Activated CD8-positive, alpha-beta T cell treated with anti-CD3 and anti-CD28 coated beads for 36 hours (primary cell): ENCODE measurements at regions of chr17 and their contacts with region 1.

Region 1: DNA sequence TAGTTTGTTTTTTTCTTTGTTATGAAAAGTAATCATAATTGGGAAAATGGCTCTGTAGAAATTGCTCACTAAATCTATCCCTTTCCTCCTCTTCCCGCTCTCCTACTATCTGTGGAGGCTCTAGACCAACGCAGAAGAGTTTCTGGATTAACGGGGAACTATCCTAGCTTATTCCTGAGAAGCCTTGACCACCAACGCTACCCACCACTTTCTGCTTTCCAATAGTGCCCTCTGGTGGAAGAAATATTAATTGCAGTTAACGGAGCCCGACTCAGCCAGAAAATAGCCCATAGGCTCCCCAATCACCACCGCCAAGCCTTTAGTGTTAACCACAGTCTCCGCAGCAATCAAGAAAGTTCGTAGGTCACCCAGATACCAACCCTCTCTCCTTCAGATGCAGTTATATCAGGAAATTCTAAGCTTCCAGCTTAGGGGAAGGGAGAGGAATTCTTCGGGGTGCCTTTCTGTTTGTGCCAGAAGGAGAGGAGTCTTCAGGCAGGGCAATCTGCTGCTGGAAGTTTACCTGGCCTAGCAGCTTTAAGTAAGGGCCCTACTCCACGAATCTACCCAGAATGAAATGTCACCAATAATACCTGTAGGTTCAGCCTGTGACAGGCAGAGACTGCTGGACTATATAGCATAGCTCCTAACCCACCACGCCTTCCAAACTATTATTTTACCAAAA is 23.0 kb upstream of the NSRP1 start:
- DNase-seq: peak; percentile 58
- ATAC-seq: peak; percentile 69
- H3K4me3 Mint-ChIP-seq: no peak overlapping the region
- H3K27ac Mint-ChIP-seq: no peak overlapping the region
- H3K4me1 Mint-ChIP-seq: peaks cover 4% of the 10 kb centered on the region
- H3K27me3 Mint-ChIP-seq: peaks cover 11% of the 10 kb centered on the region
- CTCF ChIP-seq: peak; percentile 91

Region 2: DNA sequence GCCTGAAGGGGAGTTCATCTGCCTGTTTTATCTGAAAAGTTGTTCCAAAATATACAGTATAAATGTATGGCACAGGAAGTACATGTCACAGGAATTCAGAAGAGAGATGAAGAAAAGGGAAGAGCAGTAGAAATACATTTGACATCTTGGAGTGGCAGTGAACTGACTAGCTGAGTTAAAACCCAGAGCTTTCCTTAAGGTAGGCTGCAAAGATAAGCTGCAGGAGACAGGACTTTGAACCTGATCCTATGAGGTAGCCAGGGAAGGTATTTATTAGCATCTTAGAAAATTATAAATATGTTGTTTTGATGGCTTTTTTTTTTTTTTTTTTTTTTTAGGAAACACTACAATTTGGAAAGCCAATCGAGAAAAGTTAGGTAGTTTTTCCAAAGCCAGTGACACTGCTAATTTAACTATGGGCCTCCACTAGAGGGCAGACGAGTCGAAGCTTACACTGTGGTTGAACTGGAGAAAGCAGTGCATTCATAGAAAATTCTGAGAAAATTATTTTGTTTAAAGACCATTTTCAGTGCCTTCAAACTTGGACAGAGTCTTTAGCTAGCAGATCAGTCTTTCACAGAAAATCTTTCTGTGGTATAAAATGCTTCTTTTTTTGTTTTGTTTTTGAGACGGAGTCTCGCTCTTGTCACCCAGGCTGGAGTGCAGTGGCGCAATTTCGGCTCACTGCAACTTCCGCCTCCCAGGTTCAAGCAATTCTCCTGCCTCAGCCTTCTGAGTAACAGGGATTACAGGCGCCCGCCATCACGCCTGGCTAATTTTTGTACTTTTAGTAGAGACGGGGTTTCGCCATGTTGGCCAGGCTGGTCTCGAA is 285.9 kb before region 1 on chr17:
- CTCF ChIA-PET with region 1: interaction called, 11 read pairs
- POLR2A ChIA-PET with region 1: no interaction called
- intact Hi-C with region 1: no loop called
- DNase-seq: peak; percentile 81
- ATAC-seq: peak; percentile 77
- H3K4me3 Mint-ChIP-seq: no peak overlapping the region
- H3K27ac Mint-ChIP-seq: no peak overlapping the region
- H3K4me1 Mint-ChIP-seq: peaks cover 14% of the 10 kb centered on the region
- H3K27me3 Mint-ChIP-seq: no peaks in the 10 kb centered on the region
- CTCF ChIP-seq: peak; percentile 90

Region 3: GRCh38 chr17:30021708-30022317 is 71.8 kb before region 1 on chr17:
- CTCF ChIA-PET with region 1: interaction called, 42 read pairs
- POLR2A ChIA-PET with region 1: interaction called, 3 read pairs
- intact Hi-C with region 1: loop called (anchors 1 kb)
- DNase-seq: peak; percentile 60
- ATAC-seq: peak; percentile 53
- H3K4me3 Mint-ChIP-seq: no peak overlapping the region
- H3K27ac Mint-ChIP-seq: no peak overlapping the region
- H3K4me1 Mint-ChIP-seq: no peaks in the 10 kb centered on the region
- H3K27me3 Mint-ChIP-seq: peaks cover 3% of the 10 kb centered on the region
- CTCF ChIP-seq: peak; percentile 95

Region 4: GRCh38 chr17:30041551-30041950 is 52.1 kb before region 1 on chr17:
- CTCF ChIA-PET with region 1: interaction called, 20 read pairs
- POLR2A ChIA-PET with region 1: interaction called, 5 read pairs
- intact Hi-C with region 1: no loop called
- DNase-seq: no peak
- ATAC-seq: no peak
- H3K4me3 Mint-ChIP-seq: no peak overlapping the region
- H3K27ac Mint-ChIP-seq: no peak overlapping the region
- H3K4me1 Mint-ChIP-seq: no peaks in the 10 kb centered on the region
- H3K27me3 Mint-ChIP-seq: peaks cover 10% of the 10 kb centered on the region
- CTCF ChIP-seq: no peak

Region 5: DNA sequence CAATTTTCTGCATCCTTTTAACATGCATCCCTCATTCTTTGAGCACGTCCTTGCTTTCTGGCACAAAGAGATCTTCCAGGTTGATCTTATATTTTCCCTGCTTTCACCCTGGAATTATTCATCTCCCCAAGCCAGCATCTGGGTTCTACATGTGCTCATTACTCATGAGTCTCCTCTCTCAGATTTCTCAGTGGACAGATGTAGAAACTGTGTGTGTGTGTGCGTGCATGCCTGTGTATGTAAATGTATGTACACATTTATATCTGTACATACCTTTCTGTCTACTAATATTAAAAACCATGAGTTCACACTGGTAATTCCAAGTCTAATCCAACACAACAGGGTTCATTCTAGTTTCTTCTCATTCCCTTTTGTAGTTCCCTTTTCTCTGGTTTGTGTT is 18.9 kb before region 1 on chr17:
- CTCF ChIA-PET with region 1: interaction called, 10 read pairs
- POLR2A ChIA-PET with region 1: no interaction called
- intact Hi-C with region 1: no loop called
- DNase-seq: no peak
- ATAC-seq: no peak
- H3K4me3 Mint-ChIP-seq: no peak overlapping the region
- H3K27ac Mint-ChIP-seq: no peak overlapping the region
- H3K4me1 Mint-ChIP-seq: no peaks in the 10 kb centered on the region
- H3K27me3 Mint-ChIP-seq: peaks cover 10% of the 10 kb centered on the region
- CTCF ChIP-seq: no peak

Region 6: GRCh38 chr17:30248786-30249185 is 155.2 kb after region 1 on chr17:
- CTCF ChIA-PET with region 1: no interaction called
- POLR2A ChIA-PET with region 1: no interaction called
- intact Hi-C with region 1: no loop called
- DNase-seq: no peak
- ATAC-seq: no peak
- H3K4me3 Mint-ChIP-seq: no peak overlapping the region
- H3K27ac Mint-ChIP-seq: no peak overlapping the region
- H3K4me1 Mint-ChIP-seq: no peaks in the 10 kb centered on the region
- H3K27me3 Mint-ChIP-seq: no peaks in the 10 kb centered on the region
- CTCF ChIP-seq: no peak